Naive thymus-derived CD4-positive, alpha-beta T cell (primary cell): ENCODE measurements at regions of chr4 and their contacts with region 1.

Region 1: DNA sequence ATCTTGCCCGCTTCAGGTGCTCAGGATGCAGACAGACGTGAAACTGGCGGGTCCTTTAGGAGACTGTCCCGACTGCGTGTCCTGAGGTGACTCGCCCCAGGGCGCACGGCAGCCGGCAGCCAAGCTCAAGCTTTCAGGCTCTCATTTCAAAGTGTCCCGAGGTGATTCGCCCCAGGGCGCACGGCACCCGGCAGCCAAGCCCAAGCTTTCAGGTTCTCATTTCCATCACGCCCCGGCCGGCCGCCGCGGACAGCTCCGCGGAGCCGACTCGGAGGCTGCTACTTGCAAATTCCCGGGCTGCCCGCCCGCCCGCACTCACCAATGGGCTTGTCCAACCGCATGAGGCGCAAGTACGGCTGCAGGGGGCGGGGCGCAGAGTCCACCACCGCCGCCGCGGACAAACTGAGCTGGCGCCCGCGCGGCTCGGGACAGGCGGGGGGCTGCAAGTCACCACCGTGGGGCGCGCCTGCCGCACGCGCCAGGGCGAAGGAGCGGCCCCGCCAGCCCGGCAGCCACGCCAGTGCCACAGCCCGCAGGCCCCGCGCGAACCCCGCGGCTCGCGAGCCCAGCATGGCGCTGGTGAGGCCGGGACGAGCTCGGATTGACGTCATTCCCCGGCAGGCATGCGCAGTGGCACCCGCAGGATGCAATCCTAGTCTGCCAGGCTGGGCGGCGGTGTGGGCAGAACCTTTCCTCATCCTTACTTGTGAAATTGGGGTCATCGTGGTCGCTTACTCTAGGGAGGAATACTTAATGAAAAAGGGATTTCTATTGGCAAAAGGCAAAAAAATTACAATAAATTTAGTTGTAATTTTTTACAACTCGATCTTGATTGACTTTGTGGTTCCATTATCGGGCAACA is at the start of gene COQ2:
- DNase-seq: peak; percentile 87 to 96 (median 91)
- ATAC-seq: peak; percentile 91
- H3K4me3 ChIP-seq: peak within 1 kb of the TSS; percentile 96
- H3K4me3 Mint-ChIP-seq: peak within 1 kb of the TSS; percentile 80 to 99 (median 97)
- H3K27ac ChIP-seq: peak within 1 kb of the TSS; percentile 88
- H3K27ac Mint-ChIP-seq: peak within 1 kb of the TSS; percentile 88 to 99 (median 97)
- H3K4me1 ChIP-seq: peaks cover 5 to 8% of the 10 kb centered on the region in 2 donors
- H3K4me1 Mint-ChIP-seq: peaks cover 21 to 47% (median 38%) of the 10 kb centered on the region in 7 donors
- H3K27me3 ChIP-seq: no peaks in the 10 kb centered on the region
- H3K27me3 Mint-ChIP-seq: peaks cover 0 to 3% (median 0%) of the 10 kb centered on the region in 5 donors
- total RNA-seq, gene COQ2: 7.2 to 12.7 (median 10.2) TPM

Region 2: DNA sequence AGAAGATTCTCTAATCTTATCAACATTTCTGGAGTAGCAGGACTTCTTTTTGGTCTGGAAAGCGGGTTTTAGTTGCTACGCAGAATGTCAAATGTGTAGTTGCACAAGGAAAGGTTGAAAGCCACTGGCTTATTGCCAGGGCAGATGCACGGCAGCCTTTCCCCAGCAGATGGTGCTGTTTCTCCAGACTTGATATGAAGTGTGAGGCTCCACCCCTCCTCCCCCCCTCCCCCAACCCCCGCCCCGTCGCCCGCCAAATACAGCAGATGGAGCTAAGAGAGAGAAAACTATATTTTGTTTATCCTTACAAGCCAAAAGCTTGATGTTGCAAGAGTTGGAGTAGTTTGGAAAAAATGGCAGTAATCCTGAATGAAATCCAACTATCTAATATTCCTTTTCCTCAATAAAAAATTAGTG is 822.0 kb before region 1 on chr4:
- CTCF ChIA-PET with region 1: no interaction called
- POLR2A ChIA-PET with region 1: no interaction called
- intact Hi-C with region 1: loop called (anchors 1 to 10 kb)
- DNase-seq: peak; percentile 60 to 83 (median 79)
- ATAC-seq: peak; percentile 96
- H3K4me3 ChIP-seq: no peak overlapping the region
- H3K4me3 Mint-ChIP-seq: no peak overlapping the region
- H3K27ac ChIP-seq: no peak overlapping the region
- H3K27ac Mint-ChIP-seq: peak overlapping the region in 1 of 9 donors; percentile 34
- H3K4me1 ChIP-seq: no peaks in the 10 kb centered on the region
- H3K4me1 Mint-ChIP-seq: peaks cover 0 to 5% (median 0%) of the 10 kb centered on the region in 7 donors
- H3K27me3 ChIP-seq: no peaks in the 10 kb centered on the region
- H3K27me3 Mint-ChIP-seq: no peaks in the 10 kb centered on the region

Region 3: DNA sequence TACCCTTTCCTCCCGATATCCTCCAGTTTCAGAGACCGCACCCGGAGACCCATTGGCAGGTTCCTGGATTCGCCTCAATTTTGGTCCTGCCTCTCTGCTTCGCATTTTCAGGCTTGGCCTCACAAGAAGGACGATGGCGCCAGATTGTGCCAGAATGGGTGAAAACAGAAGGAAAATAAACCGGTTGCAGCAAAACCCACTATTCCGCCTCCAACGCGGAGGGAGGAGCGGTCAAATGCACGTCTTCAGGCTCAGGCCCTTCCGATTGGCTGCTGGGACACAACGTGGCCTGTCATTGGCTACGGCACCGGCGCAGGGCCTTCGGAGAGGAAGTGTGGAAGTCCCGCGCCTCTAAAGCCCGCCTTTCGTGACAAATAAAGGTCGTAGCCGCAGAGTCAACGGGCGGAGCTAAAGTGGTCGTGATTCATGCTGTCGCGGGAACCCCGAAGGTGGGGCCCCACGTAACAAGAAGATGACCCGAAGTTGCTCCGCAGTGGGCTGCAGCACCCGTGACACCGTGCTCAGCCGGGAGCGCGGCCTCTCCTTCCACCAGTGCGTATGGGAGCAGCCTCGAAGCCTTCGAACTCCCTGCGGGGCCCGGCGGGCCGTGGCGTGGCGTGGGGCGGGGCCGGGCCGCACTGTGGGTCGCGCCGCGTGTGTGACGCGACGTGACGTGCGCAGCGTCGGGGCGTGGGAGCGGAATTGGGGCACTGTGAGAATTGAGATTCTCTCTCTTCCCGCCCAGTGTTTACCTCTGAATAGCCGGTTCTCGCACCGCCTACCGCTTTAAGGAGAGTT is 383.9 kb before region 1 on chr4 and contains the start of gene THAP9:
- CTCF ChIA-PET with region 1: no interaction called
- POLR2A ChIA-PET with region 1: no interaction called
- intact Hi-C with region 1: loop called (anchors 1 to 2 kb)
- DNase-seq: peak; percentile 92 to 100 (median 98)
- ATAC-seq: peak; percentile 91
- H3K4me3 ChIP-seq: peak within 1 kb of the TSS; percentile 91
- H3K4me3 Mint-ChIP-seq: no peak within 1 kb of the TSS
- H3K27ac ChIP-seq: peak within 1 kb of the TSS; percentile 98
- H3K27ac Mint-ChIP-seq: no peak within 1 kb of the TSS
- H3K4me1 ChIP-seq: peaks cover 13 to 15% of the 10 kb centered on the region in 2 donors
- H3K4me1 Mint-ChIP-seq: peaks cover 0 to 30% (median 15%) of the 10 kb centered on the region in 7 donors
- H3K27me3 ChIP-seq: no peaks in the 10 kb centered on the region
- H3K27me3 Mint-ChIP-seq: peaks cover 0 to 2% (median 0%) of the 10 kb centered on the region in 5 donors
- total RNA-seq, gene THAP9: 2.2 to 4.9 (median 4.4) TPM

Region 4: DNA sequence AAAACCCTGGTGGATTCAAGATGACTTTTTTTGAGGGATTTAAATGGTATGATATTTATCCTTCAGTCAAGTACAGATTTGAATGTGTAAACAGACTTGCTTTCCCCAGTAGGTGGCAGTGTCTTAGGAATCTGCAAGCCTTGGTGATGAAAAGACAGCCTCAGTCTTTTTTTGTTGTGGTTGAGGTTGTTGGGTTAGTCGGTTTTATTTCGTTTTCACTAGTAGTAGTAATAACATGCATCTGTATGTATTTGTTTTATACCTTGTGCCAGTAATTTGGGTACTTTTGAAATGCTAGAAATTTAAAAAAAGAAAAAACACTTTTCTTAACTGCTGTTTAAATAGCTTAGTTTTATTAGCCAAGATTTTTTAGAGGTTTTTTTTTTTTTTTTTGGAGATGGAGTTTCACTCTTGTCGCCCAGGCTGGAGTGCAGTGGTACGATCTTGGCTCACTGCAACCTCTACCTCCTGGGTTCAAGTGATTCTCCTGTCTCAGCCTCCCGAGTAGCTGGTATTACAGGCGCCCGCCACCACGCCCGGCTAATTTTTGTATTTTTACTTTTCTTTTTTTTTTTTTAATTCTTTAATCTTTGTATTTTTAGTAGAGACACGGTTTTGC is 210.2 kb before region 1 on chr4:
- CTCF ChIA-PET with region 1: interaction called, 11 read pairs
- POLR2A ChIA-PET with region 1: interaction called, 5 read pairs
- intact Hi-C with region 1: loop called (anchors 1 kb)
- DNase-seq: peak in 8 of 9 donors; percentile 49 to 91 (median 85)
- ATAC-seq: peak; percentile 99
- H3K4me3 ChIP-seq: no peak overlapping the region
- H3K4me3 Mint-ChIP-seq: peak overlapping the region; percentile 43 to 85 (median 76)
- H3K27ac ChIP-seq: no peak overlapping the region
- H3K27ac Mint-ChIP-seq: peak overlapping the region; percentile 19 to 87 (median 79)
- H3K4me1 ChIP-seq: peaks cover 0 to 6% of the 10 kb centered on the region in 2 donors
- H3K4me1 Mint-ChIP-seq: peaks cover 8 to 28% (median 14%) of the 10 kb centered on the region in 7 donors
- H3K27me3 ChIP-seq: no peaks in the 10 kb centered on the region
- H3K27me3 Mint-ChIP-seq: no peaks in the 10 kb centered on the region

Region 5: GRCh38 chr4:83269256-83269655 is 15.2 kb before region 1 on chr4:
- CTCF ChIA-PET with region 1: interaction called, 6 read pairs
- POLR2A ChIA-PET with region 1: interaction called, 4 read pairs
- intact Hi-C with region 1: loop called in 1 of 2 experiments (anchors 2 kb)
- DNase-seq: no peak
- ATAC-seq: no peak
- H3K4me3 ChIP-seq: no peak overlapping the region
- H3K4me3 Mint-ChIP-seq: no peak overlapping the region
- H3K27ac ChIP-seq: no peak overlapping the region
- H3K27ac Mint-ChIP-seq: no peak overlapping the region
- H3K4me1 ChIP-seq: peaks cover 0 to 5% of the 10 kb centered on the region in 2 donors
- H3K4me1 Mint-ChIP-seq: peaks cover 0 to 13% (median 0%) of the 10 kb centered on the region in 7 donors
- H3K27me3 ChIP-seq: no peaks in the 10 kb centered on the region
- H3K27me3 Mint-ChIP-seq: no peaks in the 10 kb centered on the region

Region 6: DNA sequence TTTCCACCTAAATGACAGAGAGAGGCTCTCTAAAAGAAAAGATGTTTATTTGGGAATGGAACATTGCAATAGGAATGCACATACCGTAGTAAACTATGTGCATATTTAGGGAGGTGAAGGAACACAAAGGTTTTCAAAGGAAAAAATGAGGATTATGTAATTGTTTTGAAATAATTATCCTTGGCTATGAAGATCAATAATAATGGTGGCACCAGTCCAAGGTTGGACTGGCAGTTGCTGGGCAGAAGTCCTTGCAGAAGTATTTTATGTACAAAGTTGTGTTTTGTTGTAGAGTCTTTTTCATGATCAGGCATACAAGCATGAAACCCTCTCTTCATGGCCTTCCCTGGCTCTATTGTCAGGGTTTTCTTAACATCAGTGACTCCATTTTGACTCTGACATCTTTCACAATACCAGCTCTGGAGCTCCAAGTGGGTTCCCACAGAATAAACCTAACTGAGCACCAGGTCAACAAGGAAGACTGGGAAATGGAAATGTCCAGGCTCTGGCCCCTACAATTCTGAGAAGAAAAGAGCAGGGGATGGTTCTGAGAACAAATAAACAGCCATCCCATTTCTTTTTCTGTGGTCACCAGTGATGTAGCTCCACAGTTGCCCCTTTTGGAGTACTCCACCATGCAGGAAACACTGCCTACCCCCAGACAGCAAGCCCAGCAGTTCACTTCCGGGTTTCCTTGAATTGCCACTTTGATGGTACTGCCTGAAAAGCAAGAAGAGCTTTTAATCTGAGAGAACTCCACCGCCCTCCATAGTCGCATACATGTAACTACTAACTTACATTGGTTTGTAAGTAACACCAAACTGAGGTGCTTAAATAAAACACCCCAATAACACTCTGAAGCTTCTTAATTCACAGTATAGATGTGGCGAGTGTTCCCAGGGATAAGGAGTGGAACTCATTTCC is 103.6 kb after region 1 on chr4:
- CTCF ChIA-PET with region 1: no interaction called
- POLR2A ChIA-PET with region 1: no interaction called
- intact Hi-C with region 1: loop called (anchors 1 kb)
- DNase-seq: peak in 7 of 9 donors; percentile 31 to 60 (median 55)
- ATAC-seq: peak; percentile 73
- H3K4me3 ChIP-seq: no peak overlapping the region
- H3K4me3 Mint-ChIP-seq: peak overlapping the region in 2 of 10 donors; percentile 5 to 32
- H3K27ac ChIP-seq: no peak overlapping the region
- H3K27ac Mint-ChIP-seq: peak overlapping the region in 8 of 9 donors; percentile 15 to 84 (median 60)
- H3K4me1 ChIP-seq: peaks cover 0 to 11% of the 10 kb centered on the region in 2 donors
- H3K4me1 Mint-ChIP-seq: peaks cover 0 to 20% (median 11%) of the 10 kb centered on the region in 7 donors
- H3K27me3 ChIP-seq: no peaks in the 10 kb centered on the region
- H3K27me3 Mint-ChIP-seq: peaks cover 0 to 9% (median 0%) of the 10 kb centered on the region in 5 donors

Region 7: GRCh38 chr4:83639849-83640493 is 355.5 kb after region 1 on chr4:
- CTCF ChIA-PET with region 1: no interaction called
- POLR2A ChIA-PET with region 1: no interaction called
- intact Hi-C with region 1: loop called (anchors 1 to 10 kb)
- DNase-seq: peak in 7 of 9 donors; percentile 38 to 66 (median 61)
- ATAC-seq: peak; percentile 79
- H3K4me3 ChIP-seq: no peak overlapping the region
- H3K4me3 Mint-ChIP-seq: no peak overlapping the region
- H3K27ac ChIP-seq: no peak overlapping the region
- H3K27ac Mint-ChIP-seq: no peak overlapping the region
- H3K4me1 ChIP-seq: no peaks in the 10 kb centered on the region
- H3K4me1 Mint-ChIP-seq: peaks cover 0 to 4% (median 3%) of the 10 kb centered on the region in 7 donors
- H3K27me3 ChIP-seq: no peaks in the 10 kb centered on the region
- H3K27me3 Mint-ChIP-seq: peaks cover 0 to 14% (median 5%) of the 10 kb centered on the region in 5 donors